Cardiac septum (tissue), 1 donor: ENCODE measurements at regions of chr6 and their contacts with region 1.

Region 1: DNA sequence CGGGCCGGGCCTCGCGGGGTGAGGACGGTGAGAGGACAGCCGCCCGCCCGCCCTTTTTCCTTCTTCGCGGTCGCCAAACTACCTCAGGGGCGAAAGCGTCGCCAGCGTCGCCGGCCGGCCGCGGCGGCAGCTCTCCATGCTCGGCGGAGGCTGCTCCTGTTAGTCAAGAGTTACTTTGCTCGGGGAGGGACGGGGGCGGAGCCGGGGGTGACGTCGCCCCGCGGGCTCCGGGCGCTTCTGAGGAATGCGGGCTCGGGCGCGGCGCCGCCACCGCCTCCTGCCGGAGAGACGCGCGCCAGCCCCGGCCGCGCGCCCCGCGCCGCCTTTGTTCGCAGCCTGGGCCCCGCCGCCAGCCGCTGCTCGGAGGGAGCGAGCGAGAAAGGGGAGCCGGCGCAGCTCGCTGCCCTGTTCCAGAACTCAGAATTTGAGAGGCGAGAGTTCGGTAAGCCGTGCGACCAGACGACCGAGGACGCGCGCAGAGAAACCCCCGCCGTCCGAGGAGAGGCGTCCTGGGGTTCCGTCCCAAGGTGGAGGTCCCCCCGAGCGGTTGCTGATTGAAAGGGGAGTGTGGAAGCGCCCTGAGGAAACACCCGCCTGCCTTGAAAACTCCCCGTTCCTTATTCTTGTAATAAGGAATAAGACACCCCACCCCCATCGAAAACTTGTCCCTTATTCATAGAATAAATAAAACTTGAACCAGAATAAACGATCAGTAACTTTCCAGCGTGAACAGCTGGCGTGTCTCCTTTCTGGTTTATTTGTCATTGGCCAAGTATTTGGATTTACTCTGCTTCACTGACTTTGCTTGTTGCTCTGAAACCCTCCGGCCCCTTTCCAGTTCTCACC is at the start of gene PTPRK:
- DNase-seq: peak; percentile 94
- total RNA-seq, gene PTPRK: 51.4 TPM

Region 2: GRCh38 chr6:128068116-128068479 is 452.6 kb before region 1 on chr6:
- intact Hi-C with region 1: loop called (anchors 10 kb)
- DNase-seq: no peak

Region 3: GRCh38 chr6:128339635-128340450 is 180.8 kb before region 1 on chr6:
- intact Hi-C with region 1: loop called (anchors 10 kb)
- DNase-seq: no peak

Region 4: DNA sequence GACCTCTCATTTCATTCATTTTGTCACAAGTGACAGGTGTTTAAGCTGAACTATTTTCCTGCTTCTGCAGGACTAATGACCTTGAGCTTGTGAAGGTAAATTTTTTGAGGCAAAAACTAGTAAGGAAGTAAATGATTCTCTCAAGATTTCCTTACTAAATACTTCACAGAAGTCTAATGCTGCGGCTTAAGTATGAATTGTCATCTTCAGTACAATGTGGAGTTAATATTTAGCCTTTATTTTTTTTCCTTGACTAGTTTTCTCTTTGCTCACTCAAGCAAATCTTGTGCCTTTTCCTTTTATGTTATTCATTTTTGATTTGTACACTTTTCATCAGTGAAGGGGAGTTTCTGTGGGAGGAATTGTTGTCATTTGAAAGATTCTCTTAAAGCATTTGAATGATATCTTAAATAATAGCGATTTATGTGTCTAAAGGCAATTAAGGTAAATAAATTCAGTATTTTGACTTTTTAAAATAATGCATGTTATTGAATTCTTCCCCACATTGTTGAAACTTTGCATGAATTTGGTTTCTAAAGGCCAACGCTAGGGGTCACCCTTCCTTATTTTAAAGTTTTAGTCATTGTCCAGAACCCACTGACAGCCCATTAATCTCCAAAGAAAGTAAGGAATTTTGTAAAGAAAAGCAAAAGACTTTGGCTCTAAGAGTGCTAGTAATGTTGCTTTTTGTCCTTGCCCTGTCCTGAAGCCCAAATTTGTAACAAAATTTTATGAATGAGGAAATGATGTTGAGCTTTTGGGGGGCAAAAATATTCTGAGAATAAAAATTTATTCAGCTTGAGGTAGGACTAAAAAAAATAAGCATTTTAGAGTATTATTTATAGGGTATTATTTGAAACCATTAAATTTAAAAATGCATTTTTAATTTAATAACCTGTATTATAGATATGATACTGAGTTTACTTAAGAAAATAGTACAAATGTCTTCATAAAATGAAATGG is 204.9 kb after region 1 on chr6:
- intact Hi-C with region 1: loop called (anchors 10 kb)
- DNase-seq: no peak